Heart left ventricle (tissue), 16 donors: ENCODE measurements at regions of chr1 and their contacts with region 1.

Region 1: GRCh38 chr1:67760030-67760821 is 73.0 kb downstream of the GNG12 start:
- DNase-seq: peak in 4 of 5 donors; percentile 38 to 61 (median 45)
- ATAC-seq: peak; percentile 59 to 77 (median 68)
- H3K4me3 ChIP-seq: no peak overlapping the region
- H3K27ac ChIP-seq: peak overlapping the region in 7 of 12 donors; percentile 5 to 34 (median 21)
- H3K4me1 ChIP-seq: peaks cover 0 to 32% (median 16%) of the 10 kb centered on the region in 12 donors
- H3K27me3 ChIP-seq: no peaks in the 10 kb centered on the region
- CTCF ChIP-seq: peak; percentile 83 to 95 (median 90)
- POLR2A ChIP-seq: no peak

Region 2: DNA sequence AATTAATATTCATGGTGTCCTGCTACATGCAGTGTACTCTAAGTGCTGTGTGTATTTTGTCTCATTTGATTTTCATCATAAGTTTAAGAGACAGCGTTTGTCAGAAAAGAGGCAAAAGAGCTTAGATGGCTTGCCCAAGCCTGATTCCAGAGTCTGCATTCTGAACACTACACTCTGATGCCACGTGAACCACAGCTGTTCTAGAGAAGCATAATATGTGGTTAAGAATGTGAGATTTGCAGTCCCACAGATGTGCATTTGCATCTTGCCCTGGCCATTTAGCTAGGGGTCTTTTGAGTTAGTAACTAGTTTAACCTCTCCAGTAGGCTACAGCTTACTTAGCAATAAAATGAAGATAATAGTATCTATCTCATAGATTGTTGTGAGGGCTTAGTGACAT is 84.4 kb before region 1 on chr1:
- intact Hi-C with region 1: no loop called
- DNase-seq: no peak
- ATAC-seq: no peak
- H3K4me3 ChIP-seq: no peak overlapping the region
- H3K27ac ChIP-seq: peak overlapping the region in 1 of 12 donors; percentile 28
- H3K4me1 ChIP-seq: peaks cover 0 to 17% (median 10%) of the 10 kb centered on the region in 12 donors
- H3K27me3 ChIP-seq: no peaks in the 10 kb centered on the region
- CTCF ChIP-seq: no peak
- POLR2A ChIP-seq: no peak

Region 3: GRCh38 chr1:67735806-67736627 is 24.2 kb before region 1 on chr1:
- intact Hi-C with region 1: no loop called
- DNase-seq: peak; percentile 74 to 85 (median 75)
- ATAC-seq: peak; percentile 63 to 91 (median 89)
- H3K4me3 ChIP-seq: peak overlapping the region in 5 of 12 donors; percentile 10 to 23 (median 21)
- H3K27ac ChIP-seq: peak overlapping the region; percentile 5 to 79 (median 64)
- H3K4me1 ChIP-seq: peaks cover 3 to 60% (median 47%) of the 10 kb centered on the region in 12 donors
- H3K27me3 ChIP-seq: no peaks in the 10 kb centered on the region
- CTCF ChIP-seq: no peak
- POLR2A ChIP-seq: no peak

Region 4: GRCh38 chr1:67897270-67897949 is 137.2 kb after region 1 on chr1:
- intact Hi-C with region 1: no loop called
- DNase-seq: no peak
- ATAC-seq: no peak
- H3K4me3 ChIP-seq: no peak overlapping the region
- H3K27ac ChIP-seq: no peak overlapping the region
- H3K4me1 ChIP-seq: no peaks in the 10 kb centered on the region
- H3K27me3 ChIP-seq: no peaks in the 10 kb centered on the region
- CTCF ChIP-seq: no peak
- POLR2A ChIP-seq: no peak

Region 5: DNA sequence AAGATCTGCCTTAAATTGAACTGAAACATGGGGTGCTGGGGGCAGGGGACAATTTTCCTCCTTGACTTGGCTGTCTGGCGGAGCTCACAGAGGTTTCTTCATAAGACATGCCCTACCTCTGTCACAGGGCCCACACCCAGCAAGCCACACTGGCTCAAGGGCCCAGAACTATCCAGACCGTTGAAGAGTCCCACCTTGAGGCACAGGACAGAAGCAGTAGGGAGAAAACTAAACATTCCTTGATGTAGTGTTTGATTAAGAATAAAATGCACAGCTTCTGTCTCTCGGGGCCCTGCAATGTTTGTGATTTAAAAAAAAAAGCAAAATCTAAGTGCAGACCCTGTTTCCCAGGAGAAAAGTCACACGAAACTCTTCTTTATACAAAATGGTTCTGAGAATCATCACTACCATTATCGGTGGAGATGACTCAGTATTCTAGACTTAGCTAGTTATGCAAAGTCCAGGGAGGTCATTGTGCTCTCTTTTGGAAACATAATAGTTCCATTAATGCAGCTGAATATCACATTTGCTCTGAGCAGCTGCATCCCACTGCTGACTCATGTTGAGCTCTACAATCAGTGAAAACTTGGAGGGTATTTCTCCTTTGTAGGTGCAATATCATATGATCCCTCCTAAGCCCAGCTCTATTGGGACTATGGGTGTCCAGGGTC is 343.8 kb after region 1 on chr1:
- intact Hi-C with region 1: loop called in 1 of 10 experiments (anchors 10 kb)
- DNase-seq: no peak
- ATAC-seq: no peak
- H3K4me3 ChIP-seq: no peak overlapping the region
- H3K27ac ChIP-seq: no peak overlapping the region
- H3K4me1 ChIP-seq: no peaks in the 10 kb centered on the region
- H3K27me3 ChIP-seq: no peaks in the 10 kb centered on the region
- CTCF ChIP-seq: no peak
- POLR2A ChIP-seq: no peak

Region 6: GRCh38 chr1:68346188-68346808 is 586.1 kb after region 1 on chr1:
- intact Hi-C with region 1: loop called in 5 of 10 experiments (anchors 5 to 10 kb)
- DNase-seq: no peak
- ATAC-seq: peak in 1 of 4 donors; percentile 34
- H3K4me3 ChIP-seq: no peak overlapping the region
- H3K27ac ChIP-seq: no peak overlapping the region
- H3K4me1 ChIP-seq: peaks cover 0 to 5% (median 0%) of the 10 kb centered on the region in 12 donors
- H3K27me3 ChIP-seq: no peaks in the 10 kb centered on the region
- CTCF ChIP-seq: peak; percentile 37 to 67 (median 43)
- POLR2A ChIP-seq: no peak